ENCODE measurements at regions of chr3 and their contacts with region 1.

Region 1: GRCh38 chr3:148075763-148076716 is 621.7 kb upstream of the AGTR1 start:
- DNase-seq: peak; percentile 16
- ATAC-seq: peak; percentile 86
- H3K4me3 ChIP-seq: no peak overlapping the region
- H3K27ac ChIP-seq: no peak overlapping the region
- H3K4me1 ChIP-seq: no peaks in the 10 kb centered on the region
- H3K27me3 ChIP-seq: no peaks in the 10 kb centered on the region
- CTCF ChIP-seq: peak; percentile 51; the same call in 1 of the 2 replicates
- EP300 ChIP-seq: no peak
- POLR2A ChIP-seq: no peak
- RAD21 ChIP-seq: no peak

Region 2: GRCh38 chr3:146817704-146818103 is 1258.3 kb before region 1 on chr3:
- CTCF ChIA-PET with region 1: no interaction called
- POLR2A ChIA-PET with region 1: no interaction called
- in situ Hi-C with region 1: no loop called
- intact Hi-C with region 1: loop called (anchors 2 kb)
- DNase-seq: no peak
- ATAC-seq: no peak
- H3K4me3 ChIP-seq: no peak overlapping the region
- H3K27ac ChIP-seq: no peak overlapping the region
- H3K4me1 ChIP-seq: no peaks in the 10 kb centered on the region
- H3K27me3 ChIP-seq: no peaks in the 10 kb centered on the region
- CTCF ChIP-seq: peak; percentile 18; the same call in 1 of the 2 replicates
- EP300 ChIP-seq: no peak
- POLR2A ChIP-seq: no peak
- RAD21 ChIP-seq: no peak

Region 3: GRCh38 chr3:147369661-147370123 is 706.3 kb before region 1 on chr3:
- CTCF ChIA-PET with region 1: no interaction called
- POLR2A ChIA-PET with region 1: no interaction called
- in situ Hi-C with region 1: no loop called
- intact Hi-C with region 1: loop called (anchors 5 kb)
- DNase-seq: no peak
- ATAC-seq: no peak
- H3K4me3 ChIP-seq: no peak overlapping the region
- H3K27ac ChIP-seq: no peak overlapping the region
- H3K4me1 ChIP-seq: peaks cover 18% of the 10 kb centered on the region
- H3K27me3 ChIP-seq: peaks cover 0 to 12% of the 10 kb centered on the region in 2 experiments; a peak in 2 of 5 replicates
- CTCF ChIP-seq: no peak
- EP300 ChIP-seq: no peak
- POLR2A ChIP-seq: no peak
- RAD21 ChIP-seq: no peak

Region 4: GRCh38 chr3:147838650-147839049 is 237.4 kb before region 1 on chr3:
- CTCF ChIA-PET with region 1: no interaction called
- POLR2A ChIA-PET with region 1: no interaction called
- in situ Hi-C with region 1: no loop called
- intact Hi-C with region 1: loop called (anchors 2 kb)
- DNase-seq: no peak
- ATAC-seq: peak; percentile 44; the same call in 2 of the 3 replicates
- H3K4me3 ChIP-seq: no peak overlapping the region
- H3K27ac ChIP-seq: no peak overlapping the region
- H3K4me1 ChIP-seq: no peaks in the 10 kb centered on the region
- H3K27me3 ChIP-seq: peaks cover 0 to 1% of the 10 kb centered on the region in 2 experiments; a peak in 1 of 5 replicates
- CTCF ChIP-seq: peak; percentile 20; the same call in 1 of the 2 replicates
- EP300 ChIP-seq: no peak
- POLR2A ChIP-seq: no peak
- RAD21 ChIP-seq: no peak